MCF 10A (cell line): ENCODE measurements at regions of chr11 and their contacts with region 1.

Region 1: DNA sequence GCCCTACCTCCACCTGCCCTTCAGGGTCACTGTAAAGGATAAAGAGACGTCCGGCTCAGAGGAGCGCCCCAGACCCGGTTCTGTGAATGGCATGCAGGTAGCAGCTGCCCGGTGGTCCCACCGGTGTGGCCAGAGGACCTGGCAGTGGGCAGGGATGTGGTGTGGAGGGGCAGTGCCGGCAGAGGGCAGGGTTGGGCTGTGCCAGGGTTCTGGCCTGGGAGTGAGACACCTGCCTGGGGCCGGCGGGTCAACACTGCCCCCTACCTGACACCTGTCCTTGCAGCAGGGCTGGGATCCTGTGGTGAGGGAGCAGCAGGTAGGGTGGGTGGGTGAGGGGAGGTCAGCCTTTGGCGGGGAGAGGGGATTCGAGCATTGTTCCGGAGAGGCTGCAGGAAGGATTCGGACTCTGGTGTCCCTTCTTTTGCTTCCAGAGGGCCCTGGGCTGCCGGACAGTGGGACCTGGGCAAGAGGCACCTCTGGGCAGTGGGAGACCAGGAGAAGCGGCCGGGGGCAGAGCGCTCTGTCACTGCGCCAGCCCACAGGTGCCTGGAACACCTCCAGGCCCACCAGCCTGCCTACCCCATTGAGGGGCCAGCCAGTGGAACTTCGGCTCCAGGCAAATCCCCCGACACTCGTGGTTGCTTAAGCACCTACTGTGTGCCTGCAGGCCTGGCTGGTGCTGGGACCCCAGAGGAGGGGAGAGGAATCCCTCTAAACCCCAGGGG is 1.6 kb upstream of the PHLDA2 start:
- DNase-seq: peak; percentile 88
- H3K4me3 Mint-ChIP-seq: peak overlapping the region; percentile 73
- H3K27ac Mint-ChIP-seq: peak overlapping the region; percentile 94
- H3K4me1 Mint-ChIP-seq: peaks cover 20% of the 10 kb centered on the region
- H3K27me3 Mint-ChIP-seq: no peaks in the 10 kb centered on the region
- CTCF ChIP-seq: peak; percentile 92

Region 2: DNA sequence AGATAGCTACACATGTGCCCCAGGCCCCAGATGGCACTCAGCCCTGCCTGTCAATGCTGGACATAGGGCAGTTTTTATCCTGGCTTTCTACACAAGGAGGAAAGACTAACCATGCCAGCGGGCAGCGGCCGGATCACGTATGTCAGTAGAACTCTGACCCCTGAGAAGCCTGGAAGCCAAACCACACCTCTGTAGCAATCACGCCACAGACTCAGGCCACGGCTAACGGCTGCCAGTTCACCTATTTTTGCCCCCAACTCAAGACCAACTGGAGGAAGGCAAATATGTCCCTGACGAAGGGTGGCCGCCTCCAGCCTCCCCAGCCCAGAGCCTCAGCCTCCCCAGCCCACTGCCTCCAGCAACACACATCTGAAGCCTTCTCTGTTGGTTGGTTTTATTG is 561.0 kb before region 1 on chr11:
- CTCF ChIA-PET with region 1: no interaction called
- POLR2A ChIA-PET with region 1: no interaction called
- intact Hi-C with region 1: no loop called
- DNase-seq: no peak
- H3K4me3 Mint-ChIP-seq: no peak overlapping the region
- H3K27ac Mint-ChIP-seq: no peak overlapping the region
- H3K4me1 Mint-ChIP-seq: no peaks in the 10 kb centered on the region
- H3K27me3 Mint-ChIP-seq: no peaks in the 10 kb centered on the region
- CTCF ChIP-seq: no peak

Region 3: DNA sequence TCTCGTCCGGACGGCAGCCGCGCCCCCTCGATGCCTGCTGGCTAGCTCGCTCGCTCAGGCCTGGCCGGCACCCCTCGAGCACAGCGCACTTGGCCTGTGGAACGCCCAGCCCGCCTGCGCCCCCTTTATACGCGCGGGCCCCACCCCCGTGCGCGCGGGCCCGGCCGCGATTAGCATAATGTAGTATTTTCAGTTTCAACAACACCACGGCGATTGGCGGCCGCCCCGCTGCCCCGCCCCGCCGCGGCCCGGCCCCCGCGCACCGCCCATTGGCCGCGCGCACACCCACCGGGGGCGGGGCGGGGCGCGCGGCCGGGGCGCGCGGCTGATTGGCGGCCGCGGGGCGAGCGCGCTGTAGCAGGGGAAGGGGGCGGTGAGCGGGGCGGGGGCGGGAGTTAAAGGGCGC is 45.2 kb before region 1 on chr11 and contains the start of gene CDKN1C:
- CTCF ChIA-PET with region 1: interaction called, 11 read pairs
- POLR2A ChIA-PET with region 1: interaction called, 9 read pairs
- intact Hi-C with region 1: loop called (anchors 2 kb)
- DNase-seq: peak; percentile 63
- H3K4me3 Mint-ChIP-seq: peak within 1 kb of the TSS; percentile 83
- H3K27ac Mint-ChIP-seq: peak within 1 kb of the TSS; percentile 31
- H3K4me1 Mint-ChIP-seq: no peaks in the 10 kb centered on the region
- H3K27me3 Mint-ChIP-seq: no peaks in the 10 kb centered on the region
- CTCF ChIP-seq: no peak
- total RNA-seq, gene CDKN1C: 5.7 and 6.9 TPM in 2 replicates

Region 4: GRCh38 chr11:2901854-2902783 is 28.7 kb before region 1 on chr11:
- CTCF ChIA-PET with region 1: interaction called, 10 read pairs
- POLR2A ChIA-PET with region 1: interaction called, 32 read pairs
- intact Hi-C with region 1: loop called (anchors 2 kb)
- DNase-seq: peak; percentile 91
- H3K4me3 Mint-ChIP-seq: peak overlapping the region; percentile 47
- H3K27ac Mint-ChIP-seq: no peak overlapping the region
- H3K4me1 Mint-ChIP-seq: peaks cover 48% of the 10 kb centered on the region
- H3K27me3 Mint-ChIP-seq: no peaks in the 10 kb centered on the region
- CTCF ChIP-seq: no peak

Region 5: DNA sequence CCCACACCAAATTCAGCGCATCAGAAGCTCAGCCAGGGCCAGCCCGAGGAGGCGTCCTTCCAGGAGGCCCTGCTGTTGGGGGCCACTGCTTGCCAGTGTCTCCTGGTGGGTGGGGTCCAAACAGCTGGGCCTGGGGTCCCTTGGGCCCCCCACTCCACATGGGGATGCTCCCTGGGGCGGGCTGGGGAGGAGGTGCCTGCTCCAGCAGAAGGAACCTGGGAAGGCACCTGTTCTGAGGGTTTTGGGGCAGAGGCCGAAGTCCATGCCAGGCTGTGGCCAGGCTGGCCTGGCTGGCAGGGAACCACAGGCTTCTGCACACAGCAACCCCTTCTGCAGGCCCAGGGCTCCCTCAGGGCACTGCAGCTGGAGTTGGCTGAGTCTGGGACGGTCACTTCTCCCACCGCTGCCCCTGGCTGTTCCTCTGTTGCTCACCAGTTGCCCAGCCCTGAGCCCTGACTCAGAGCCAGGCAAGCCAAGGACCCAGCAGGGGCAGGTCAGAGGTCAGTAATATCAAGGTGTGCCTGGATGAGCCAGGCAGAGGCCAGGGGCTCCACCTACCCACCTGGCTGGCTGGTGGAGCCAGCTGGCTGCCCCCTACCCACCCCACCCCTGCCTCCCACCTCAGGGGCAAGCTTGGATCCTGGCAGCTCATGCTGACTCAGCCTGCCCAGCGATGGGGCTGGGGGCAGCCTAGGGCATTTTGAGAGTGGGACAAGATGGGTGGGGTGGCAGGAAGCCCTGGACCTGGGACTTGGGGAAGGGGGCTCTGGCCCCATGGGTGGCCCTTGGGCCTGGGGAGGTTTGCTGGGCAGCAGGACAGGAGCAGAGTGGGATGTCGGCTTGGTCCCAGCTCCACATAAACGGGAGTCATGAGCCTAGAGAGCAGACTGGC is 10.3 kb after region 1 on chr11:
- CTCF ChIA-PET with region 1: interaction called, 12 read pairs
- POLR2A ChIA-PET with region 1: interaction called, 20 read pairs
- intact Hi-C with region 1: no loop called
- DNase-seq: peak; percentile 66
- H3K4me3 Mint-ChIP-seq: no peak overlapping the region
- H3K27ac Mint-ChIP-seq: peak overlapping the region; percentile 35
- H3K4me1 Mint-ChIP-seq: no peaks in the 10 kb centered on the region
- H3K27me3 Mint-ChIP-seq: no peaks in the 10 kb centered on the region
- CTCF ChIP-seq: no peak

Region 6: GRCh38 chr11:2992234-2992996 is 61.5 kb after region 1 on chr11 and contains the start of gene NAP1L4:
- CTCF ChIA-PET with region 1: interaction called, 5 read pairs
- POLR2A ChIA-PET with region 1: interaction called, 19 read pairs
- intact Hi-C with region 1: loop called (anchors 5 kb)
- DNase-seq: peak; percentile 97
- H3K4me3 Mint-ChIP-seq: peak within 1 kb of the TSS; percentile 96
- H3K27ac Mint-ChIP-seq: peak within 1 kb of the TSS; percentile 99
- H3K4me1 Mint-ChIP-seq: peaks cover 21% of the 10 kb centered on the region
- H3K27me3 Mint-ChIP-seq: no peaks in the 10 kb centered on the region
- CTCF ChIP-seq: no peak
- total RNA-seq, gene NAP1L4: 103 TPM in 2 replicates

Region 7: GRCh38 chr11:3217676-3218482 is 287.0 kb after region 1 on chr11:
- CTCF ChIA-PET with region 1: no interaction called
- POLR2A ChIA-PET with region 1: no interaction called
- intact Hi-C with region 1: loop called (anchors 1 kb)
- DNase-seq: no peak
- H3K4me3 Mint-ChIP-seq: no peak overlapping the region
- H3K27ac Mint-ChIP-seq: no peak overlapping the region
- H3K4me1 Mint-ChIP-seq: peaks cover 18% of the 10 kb centered on the region
- H3K27me3 Mint-ChIP-seq: peaks cover 91% of the 10 kb centered on the region
- CTCF ChIP-seq: no peak